ENCODE measurements at regions of chr13 and their contacts with region 1.

Region 1: DNA sequence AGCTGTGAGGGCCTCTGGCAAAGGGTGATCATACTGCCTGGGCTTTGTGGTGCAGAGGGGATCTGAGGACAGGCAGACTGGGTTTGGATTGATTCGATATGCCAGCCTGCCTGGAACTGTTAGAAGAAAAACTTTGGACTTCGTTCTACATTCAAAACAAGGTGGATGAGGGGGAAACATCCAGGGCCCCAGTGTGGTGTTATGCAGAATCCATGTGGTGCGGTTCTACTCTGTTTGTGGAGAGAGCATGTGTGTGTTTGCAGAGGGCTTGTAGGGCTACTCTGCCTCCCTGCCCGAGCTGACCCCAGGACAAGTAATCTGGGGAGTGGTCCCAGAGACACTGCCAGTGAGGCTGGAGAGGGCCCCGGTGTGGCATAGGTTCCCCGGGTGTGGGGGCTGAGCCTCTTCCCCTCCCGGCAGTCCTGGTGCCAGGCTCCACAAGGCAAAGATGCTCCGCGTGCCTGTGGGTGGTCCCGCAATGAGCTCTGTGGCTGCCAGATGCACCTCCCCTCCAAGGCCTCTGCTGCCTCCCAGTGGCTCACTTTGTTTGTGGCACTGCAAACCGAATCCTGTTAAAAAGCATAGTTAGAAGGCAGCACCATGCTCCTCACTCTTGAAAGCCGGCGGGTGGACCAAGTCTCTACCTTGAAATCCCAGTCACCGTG is 22.3 kb upstream of the TFDP1 start:
- DNase-seq: peak; percentile 46 to 90
- H3K4me3 ChIP-seq: no peak overlapping the region
- H3K27ac ChIP-seq: no peak overlapping the region
- H3K4me1 ChIP-seq: peaks cover 0 to 4% (median 2%) of the 10 kb centered on the region in 4 experiments; a peak in 2 of 7 replicates
- H3K27me3 ChIP-seq: no peaks in the 10 kb centered on the region
- CTCF ChIP-seq: peak in 2 of 3 experiments; percentile 83 to 97; a peak in 3 of 4 replicates
- EP300 ChIP-seq: no peak
- POLR2A ChIP-seq: no peak
- RAD21 ChIP-seq: peak; percentile 95 to 96

Region 2: GRCh38 chr13:113307491-113307890 is 254.7 kb before region 1 on chr13:
- CTCF ChIA-PET with region 1: no interaction called
- POLR2A ChIA-PET with region 1: no interaction called
- DNase-seq: no peak
- H3K4me3 ChIP-seq: no peak overlapping the region
- H3K27ac ChIP-seq: no peak overlapping the region
- H3K4me1 ChIP-seq: no peaks in the 10 kb centered on the region
- H3K27me3 ChIP-seq: no peaks in the 10 kb centered on the region
- CTCF ChIP-seq: no peak
- EP300 ChIP-seq: no peak
- POLR2A ChIP-seq: no peak
- RAD21 ChIP-seq: no peak

Region 3: GRCh38 chr13:113417836-113418721 is 144.1 kb before region 1 on chr13:
- CTCF ChIA-PET with region 1: no interaction called
- POLR2A ChIA-PET with region 1: no interaction called
- DNase-seq: no peak
- H3K4me3 ChIP-seq: no peak overlapping the region
- H3K27ac ChIP-seq: no peak overlapping the region
- H3K4me1 ChIP-seq: peaks cover 0 to 7% (median 3%) of the 10 kb centered on the region in 4 experiments; a peak in 2 of 7 replicates
- H3K27me3 ChIP-seq: no peaks in the 10 kb centered on the region
- CTCF ChIP-seq: no peak
- EP300 ChIP-seq: no peak
- POLR2A ChIP-seq: no peak
- RAD21 ChIP-seq: no peak

Region 4: GRCh38 chr13:113458253-113459065 is 103.8 kb before region 1 on chr13:
- CTCF ChIA-PET with region 1: interaction called, 19 read pairs
- POLR2A ChIA-PET with region 1: no interaction called
- DNase-seq: no peak
- H3K4me3 ChIP-seq: no peak overlapping the region
- H3K27ac ChIP-seq: no peak overlapping the region
- H3K4me1 ChIP-seq: no peaks in the 10 kb centered on the region; a peak in 1 of 7 replicates
- H3K27me3 ChIP-seq: no peaks in the 10 kb centered on the region
- CTCF ChIP-seq: peak in 1 of 3 experiments; percentile 30; a peak in 1 of 4 replicates
- EP300 ChIP-seq: no peak
- POLR2A ChIP-seq: no peak
- RAD21 ChIP-seq: peak in 1 of 2 experiments; percentile 46; a peak in 3 of 4 replicates

Region 5: DNA sequence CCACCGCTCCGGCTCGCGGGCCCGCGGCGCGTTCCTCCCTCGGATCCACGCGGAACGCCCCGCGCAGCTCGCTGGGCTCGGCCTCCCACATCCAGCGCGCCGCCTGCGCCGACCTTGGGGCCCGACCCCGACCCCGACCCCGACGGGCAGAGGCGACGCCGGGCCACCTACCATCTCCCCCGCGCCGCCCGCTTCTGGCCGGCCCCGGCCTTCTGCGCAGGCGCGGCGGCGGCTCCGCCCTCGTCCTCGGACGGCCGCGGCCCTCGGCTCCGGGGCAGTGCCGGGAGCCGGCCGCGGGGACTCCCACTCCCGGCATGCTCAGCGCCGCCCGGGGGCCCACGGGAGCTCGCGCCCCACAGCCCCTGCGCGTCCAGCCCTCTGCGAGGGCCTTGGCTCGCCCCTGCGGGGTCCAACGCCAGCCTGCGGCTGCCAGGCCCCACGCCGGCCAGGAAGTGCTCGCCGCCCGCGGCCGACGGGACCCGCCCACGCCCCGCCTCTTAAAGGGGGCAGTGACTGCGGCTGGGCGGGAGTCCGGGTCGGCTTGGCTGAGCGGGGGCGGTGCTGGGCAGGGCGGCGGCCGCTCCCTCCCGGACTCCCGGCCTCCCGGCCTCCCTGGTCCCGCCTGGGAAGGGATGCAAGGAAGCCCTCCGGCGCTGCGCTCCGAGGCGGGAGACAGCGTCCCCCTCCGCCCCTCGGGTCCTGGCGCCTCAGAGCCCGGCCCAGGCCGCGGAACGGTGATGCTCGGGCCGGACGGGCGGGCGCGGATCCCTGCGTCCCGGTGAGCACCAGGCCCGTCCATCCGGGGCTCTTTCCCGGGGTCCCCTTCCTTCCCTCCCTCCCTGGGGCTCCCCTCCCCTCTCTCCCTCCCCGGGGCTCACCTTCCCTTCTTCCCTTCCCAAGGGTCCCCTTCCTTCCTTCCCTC is 71.5 kb before region 1 on chr13 and contains the start of gene DCUN1D2:
- CTCF ChIA-PET with region 1: interaction called, 27 read pairs
- POLR2A ChIA-PET with region 1: interaction called, 5 read pairs
- DNase-seq: peak; percentile 65 to 94
- H3K4me3 ChIP-seq: peak within 1 kb of the TSS; percentile 82 to 95 (median 91)
- H3K27ac ChIP-seq: peak within 1 kb of the TSS; percentile 55; the same call in 1 of the 2 replicates
- H3K4me1 ChIP-seq: peaks cover 3 to 18% (median 12%) of the 10 kb centered on the region in 4 experiments
- H3K27me3 ChIP-seq: no peaks in the 10 kb centered on the region
- CTCF ChIP-seq: no peak
- EP300 ChIP-seq: peak in 1 of 2 experiments; percentile 10; a peak in 1 of 3 replicates
- POLR2A ChIP-seq: peak in 1 of 2 experiments; percentile 69; a peak in 1 of 3 replicates
- RAD21 ChIP-seq: no peak
- total RNA-seq, gene DCUN1D2: 35.2 and 35.3 TPM in 2 replicates

Region 6: DNA sequence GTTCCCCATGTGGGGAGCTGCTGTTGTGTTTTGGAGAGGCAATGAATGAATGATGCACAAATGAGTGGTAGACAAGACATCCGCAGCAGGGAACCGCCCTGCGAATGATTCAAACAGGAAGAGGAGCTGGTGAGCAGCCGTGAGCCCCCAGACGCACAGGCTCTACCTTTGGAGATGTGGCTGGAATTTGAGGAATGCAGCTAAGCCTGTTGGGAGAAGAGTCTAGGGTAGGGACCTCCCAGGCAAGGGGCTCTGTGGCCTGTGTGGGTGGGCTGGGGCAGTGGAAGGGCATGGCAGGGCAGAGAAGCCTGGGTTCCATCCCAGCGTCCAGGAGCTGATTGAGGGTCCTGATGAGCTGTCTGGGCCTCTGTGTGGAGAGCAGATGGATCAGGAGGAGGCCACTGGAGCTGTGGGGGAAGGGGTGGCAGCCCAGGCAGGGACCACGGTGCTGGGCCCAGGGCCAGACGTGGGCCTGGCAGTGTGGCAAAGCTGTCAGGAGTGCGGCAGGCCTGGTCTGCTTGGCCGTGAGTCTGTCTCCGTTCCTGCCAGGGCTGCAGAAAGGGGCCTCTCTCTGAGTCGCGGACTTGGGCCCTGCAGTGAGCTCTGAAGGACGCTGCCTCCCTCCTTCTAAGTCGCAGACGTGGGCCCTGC is 29.9 kb before region 1 on chr13:
- CTCF ChIA-PET with region 1: interaction called, 15 read pairs
- POLR2A ChIA-PET with region 1: interaction called, 7 read pairs
- DNase-seq: peak; percentile 33 to 58
- H3K4me3 ChIP-seq: no peak overlapping the region
- H3K27ac ChIP-seq: peak overlapping the region; percentile 26
- H3K4me1 ChIP-seq: peaks cover 0 to 14% (median 9%) of the 10 kb centered on the region in 4 experiments; a peak in 6 of 7 replicates
- H3K27me3 ChIP-seq: no peaks in the 10 kb centered on the region
- CTCF ChIP-seq: no peak
- EP300 ChIP-seq: peak in 1 of 2 experiments; percentile 84; a peak in 1 of 3 replicates
- POLR2A ChIP-seq: no peak; a peak in 1 of 3 replicates
- RAD21 ChIP-seq: no peak

Region 7: DNA sequence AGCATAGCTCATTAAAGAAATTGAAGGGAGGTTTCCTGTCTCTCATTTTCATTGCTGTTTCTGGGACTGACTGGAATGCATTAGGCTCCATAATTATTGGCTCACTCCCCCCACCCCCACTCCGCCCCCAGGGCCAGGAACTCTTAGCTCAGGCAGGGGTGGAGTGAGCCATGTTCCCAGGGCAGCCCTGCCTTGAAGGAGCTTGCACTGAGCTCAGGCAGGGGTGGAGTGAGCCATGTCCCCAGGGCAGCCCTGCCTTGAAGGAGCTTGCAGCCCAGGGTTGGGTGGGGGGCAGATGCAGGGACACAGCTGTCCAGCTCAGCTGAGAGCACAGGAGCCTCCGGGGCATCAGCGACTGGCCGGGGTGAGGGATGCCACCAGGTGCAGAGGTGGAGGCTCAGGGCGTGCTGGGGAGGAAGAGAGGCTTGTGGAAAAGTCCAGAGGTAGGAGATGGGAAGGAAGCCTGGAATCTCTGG is 16.7 kb before region 1 on chr13:
- CTCF ChIA-PET with region 1: interaction called, 14 read pairs
- POLR2A ChIA-PET with region 1: interaction called, 7 read pairs
- DNase-seq: no peak
- H3K4me3 ChIP-seq: no peak overlapping the region
- H3K27ac ChIP-seq: no peak overlapping the region
- H3K4me1 ChIP-seq: peaks cover 0 to 4% (median 0%) of the 10 kb centered on the region in 4 experiments; a peak in 2 of 7 replicates
- H3K27me3 ChIP-seq: no peaks in the 10 kb centered on the region
- CTCF ChIP-seq: no peak
- EP300 ChIP-seq: no peak
- POLR2A ChIP-seq: no peak
- RAD21 ChIP-seq: no peak